Gastrocnemius medialis (tissue), 4 donors: ENCODE measurements at regions of chr7 and their contacts with region 1.

Region 1: DNA sequence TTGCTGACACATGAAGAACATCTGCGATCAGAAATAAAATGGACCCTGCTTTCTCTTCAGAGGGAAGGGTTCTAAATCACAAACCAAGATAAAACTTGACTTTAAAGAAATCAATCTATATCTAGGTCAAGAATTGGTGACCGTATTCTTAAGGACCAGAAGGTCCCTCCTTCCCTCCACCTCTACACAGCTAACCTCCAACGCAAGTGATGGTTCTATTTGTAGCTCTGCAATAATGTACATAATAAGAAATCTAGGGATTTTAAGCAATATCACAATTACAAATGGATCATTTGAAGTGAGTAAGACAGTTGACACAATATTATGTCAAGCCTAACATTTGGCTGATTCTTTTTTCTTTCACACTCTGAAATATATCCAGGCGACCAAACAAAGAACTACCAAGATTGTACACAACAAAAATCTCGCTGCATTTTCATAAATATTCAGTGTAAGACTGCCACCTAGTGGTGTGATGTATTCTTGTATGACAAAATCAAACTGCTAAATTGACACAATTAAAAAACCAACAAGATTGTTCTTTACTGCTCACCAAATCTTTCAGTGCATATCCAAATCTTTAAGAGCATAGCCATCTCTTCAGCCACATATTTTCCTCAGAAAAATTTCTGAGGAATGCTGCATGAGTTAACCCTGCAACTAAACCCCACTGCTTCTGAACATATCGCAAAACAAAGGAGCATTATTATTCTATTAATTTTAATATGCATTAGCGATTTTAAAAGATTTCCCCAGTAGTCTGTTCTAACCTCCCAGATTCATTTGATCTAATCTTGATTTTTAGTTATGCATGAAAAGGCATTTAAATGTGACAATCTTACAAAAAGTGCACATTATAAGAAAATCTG is 44.5 kb downstream of the ICA1 start:
- DNase-seq: no peak
- ATAC-seq: peak; percentile 60 to 63
- H3K4me3 ChIP-seq: no peak overlapping the region
- H3K27ac ChIP-seq: no peak overlapping the region
- H3K4me1 ChIP-seq: peaks cover 0 to 8% of the 10 kb centered on the region in 2 donors
- H3K27me3 ChIP-seq: no peaks in the 10 kb centered on the region
- CTCF ChIP-seq: peak; percentile 65 to 80 (median 72)
- POLR2A ChIP-seq: no peak

Region 2: GRCh38 chr7:7103343-7104313 is 1113.8 kb before region 1 on chr7:
- in situ Hi-C with region 1: no loop called
- intact Hi-C with region 1: loop called (anchors 5 kb)
- DNase-seq: no peak
- ATAC-seq: peak; percentile 74 to 80
- H3K4me3 ChIP-seq: no peak overlapping the region
- H3K27ac ChIP-seq: no peak overlapping the region
- H3K4me1 ChIP-seq: peaks cover 0 to 6% of the 10 kb centered on the region in 2 donors
- H3K27me3 ChIP-seq: no peaks in the 10 kb centered on the region
- CTCF ChIP-seq: peak; percentile 31 to 70 (median 59)
- POLR2A ChIP-seq: no peak

Region 3: DNA sequence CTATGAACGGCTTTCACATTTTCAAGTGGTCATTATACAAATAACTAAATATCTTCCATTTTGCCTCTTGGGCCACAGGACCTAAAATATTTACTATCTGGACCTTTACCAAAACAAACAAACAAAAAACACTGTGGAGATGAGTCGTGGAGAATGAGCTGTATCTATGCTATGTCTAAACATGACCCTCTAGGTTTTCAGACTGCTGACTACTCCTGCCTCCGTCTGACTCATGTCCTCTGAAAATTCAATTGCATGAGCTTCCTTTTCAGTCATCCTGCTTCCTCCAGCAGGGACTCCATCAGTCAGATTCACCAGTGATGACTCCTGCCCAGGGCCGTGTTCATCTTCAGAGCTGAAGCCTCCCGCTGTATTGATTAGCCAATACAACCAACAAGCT is 778.6 kb before region 1 on chr7:
- in situ Hi-C with region 1: loop called in 2 of 4 experiments (anchors 25 kb)
- intact Hi-C with region 1: no loop called
- DNase-seq: no peak
- ATAC-seq: no peak
- H3K4me3 ChIP-seq: no peak overlapping the region
- H3K27ac ChIP-seq: no peak overlapping the region
- H3K4me1 ChIP-seq: no peaks in the 10 kb centered on the region
- H3K27me3 ChIP-seq: no peaks in the 10 kb centered on the region
- CTCF ChIP-seq: no peak
- POLR2A ChIP-seq: no peak

Region 4: GRCh38 chr7:7653593-7654187 is 563.7 kb before region 1 on chr7:
- in situ Hi-C with region 1: loop called in 1 of 4 experiments (anchors 25 kb)
- intact Hi-C with region 1: no loop called
- DNase-seq: no peak
- ATAC-seq: no peak
- H3K4me3 ChIP-seq: no peak overlapping the region
- H3K27ac ChIP-seq: no peak overlapping the region
- H3K4me1 ChIP-seq: peaks cover 7 to 15% of the 10 kb centered on the region in 2 donors
- H3K27me3 ChIP-seq: no peaks in the 10 kb centered on the region
- CTCF ChIP-seq: peak in 2 of 5 experiments; percentile 16 to 28
- POLR2A ChIP-seq: no peak

Region 5: DNA sequence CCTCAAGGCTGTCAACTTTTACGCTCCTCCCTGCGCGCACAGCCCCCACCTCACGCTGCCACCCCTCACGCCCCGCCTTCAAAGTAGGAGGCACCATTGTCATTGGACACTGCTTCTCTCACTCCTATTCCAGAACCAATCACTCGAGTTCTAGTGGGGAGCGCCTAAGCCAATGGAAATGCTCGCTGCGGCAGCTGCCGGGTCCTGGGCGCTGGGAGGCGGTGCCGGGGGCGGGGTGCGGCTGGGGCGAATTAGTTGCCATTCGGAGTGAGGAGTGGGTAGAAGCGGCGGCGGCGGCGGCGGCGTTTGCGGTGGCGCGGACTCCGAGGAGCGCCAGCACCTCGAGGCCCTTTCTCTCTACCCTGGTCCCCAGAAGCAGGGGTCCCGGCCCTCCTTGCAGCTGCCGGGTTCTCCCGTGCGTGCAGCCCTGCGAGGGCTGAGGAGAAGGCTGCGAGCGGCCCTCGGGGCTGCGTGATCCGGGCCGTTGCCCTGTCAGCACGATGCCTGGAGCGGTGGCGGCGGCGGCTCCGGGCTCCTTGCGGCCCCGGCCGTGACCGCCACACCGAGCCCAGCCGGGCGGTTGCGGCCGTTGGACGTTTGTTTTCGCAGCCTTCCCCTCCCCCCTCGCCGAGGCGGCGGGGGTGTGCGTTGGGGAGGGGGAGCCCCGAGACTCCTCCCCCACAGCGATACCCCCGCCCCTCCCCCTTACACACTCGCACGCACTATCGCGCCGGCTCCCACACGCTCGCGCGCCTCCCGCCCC is 248.7 kb before region 1 on chr7 and contains the start of gene GLCCI1:
- in situ Hi-C with region 1: no loop called
- intact Hi-C with region 1: loop called (anchors 5 kb)
- DNase-seq: peak; percentile 97
- ATAC-seq: peak; percentile 96 to 97
- H3K4me3 ChIP-seq: peak within 1 kb of the TSS; percentile 83 to 93 (median 86)
- H3K27ac ChIP-seq: peak within 1 kb of the TSS; percentile 91 to 98 (median 93)
- H3K4me1 ChIP-seq: peaks cover 13 to 22% of the 10 kb centered on the region in 2 donors
- H3K27me3 ChIP-seq: no peaks in the 10 kb centered on the region
- CTCF ChIP-seq: no peak
- POLR2A ChIP-seq: peak; percentile 79 to 95
- total RNA-seq, gene GLCCI1: 1.2 to 6.1 (median 2.6) TPM

Region 6: DNA sequence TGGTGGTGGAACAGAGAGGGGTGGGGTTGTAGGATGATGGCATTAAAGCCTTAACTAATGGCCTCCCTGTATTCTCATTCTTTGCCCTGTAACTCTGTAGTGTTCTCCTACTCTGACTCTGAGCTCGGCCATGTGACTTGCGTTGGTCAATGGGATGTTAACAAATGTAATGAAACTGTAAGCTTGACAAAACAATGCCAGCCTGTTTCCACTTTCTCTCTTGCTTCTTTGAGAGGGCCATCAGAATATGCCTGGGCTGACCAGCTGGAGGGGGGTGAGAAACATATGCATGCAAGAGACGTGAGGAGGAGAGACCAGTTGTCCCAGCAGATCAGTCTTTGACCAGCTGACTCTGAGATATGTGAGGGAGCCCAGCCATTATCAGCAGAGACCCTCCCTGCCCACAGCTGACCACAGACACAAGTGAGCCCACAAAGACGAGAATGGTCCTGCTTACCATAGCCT is 56.0 kb before region 1 on chr7:
- in situ Hi-C with region 1: no loop called
- intact Hi-C with region 1: no loop called
- DNase-seq: no peak
- ATAC-seq: no peak
- H3K4me3 ChIP-seq: no peak overlapping the region
- H3K27ac ChIP-seq: no peak overlapping the region
- H3K4me1 ChIP-seq: no peaks in the 10 kb centered on the region
- H3K27me3 ChIP-seq: no peaks in the 10 kb centered on the region
- CTCF ChIP-seq: no peak
- POLR2A ChIP-seq: no peak

Region 7: DNA sequence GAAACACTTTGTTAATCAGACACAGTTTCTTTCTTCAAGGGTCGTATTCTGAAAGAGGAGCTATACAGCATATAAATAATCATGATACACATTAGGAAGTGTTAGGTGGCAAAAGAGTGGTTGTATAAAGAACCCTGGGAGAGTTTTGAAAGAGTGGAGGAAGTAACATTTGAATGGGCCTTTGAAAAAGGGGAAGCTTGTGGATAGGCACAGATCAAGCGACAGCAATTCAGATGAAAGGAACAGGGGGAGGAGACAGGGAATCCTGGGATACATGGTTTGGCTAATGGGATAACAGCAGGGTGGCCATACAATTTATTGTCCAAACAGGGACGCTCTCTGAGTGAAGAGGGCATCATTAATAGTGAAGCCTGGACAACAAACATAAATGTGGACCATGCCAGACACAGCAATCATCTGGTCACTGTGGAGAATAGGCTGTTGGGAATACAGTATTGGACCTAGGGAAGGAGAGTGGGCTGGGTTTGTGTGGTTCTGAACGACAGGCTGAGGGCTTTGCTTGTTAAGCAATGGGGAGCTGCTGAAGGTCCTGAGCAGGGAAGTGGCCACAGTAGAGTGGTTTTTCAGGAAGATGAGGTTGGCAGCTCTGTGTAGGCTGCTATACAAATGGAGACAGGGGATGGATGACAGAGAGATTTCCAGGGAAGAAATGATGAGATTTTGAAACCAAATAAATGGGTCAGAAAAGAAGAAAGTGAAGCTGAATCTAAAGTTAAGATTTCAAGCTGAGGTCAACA is 31.3 kb before region 1 on chr7:
- in situ Hi-C with region 1: no loop called
- intact Hi-C with region 1: no loop called
- DNase-seq: no peak
- ATAC-seq: no peak
- H3K4me3 ChIP-seq: no peak overlapping the region
- H3K27ac ChIP-seq: no peak overlapping the region
- H3K4me1 ChIP-seq: peaks cover 0 to 7% of the 10 kb centered on the region in 2 donors
- H3K27me3 ChIP-seq: no peaks in the 10 kb centered on the region
- CTCF ChIP-seq: no peak
- POLR2A ChIP-seq: no peak

Region 8: DNA sequence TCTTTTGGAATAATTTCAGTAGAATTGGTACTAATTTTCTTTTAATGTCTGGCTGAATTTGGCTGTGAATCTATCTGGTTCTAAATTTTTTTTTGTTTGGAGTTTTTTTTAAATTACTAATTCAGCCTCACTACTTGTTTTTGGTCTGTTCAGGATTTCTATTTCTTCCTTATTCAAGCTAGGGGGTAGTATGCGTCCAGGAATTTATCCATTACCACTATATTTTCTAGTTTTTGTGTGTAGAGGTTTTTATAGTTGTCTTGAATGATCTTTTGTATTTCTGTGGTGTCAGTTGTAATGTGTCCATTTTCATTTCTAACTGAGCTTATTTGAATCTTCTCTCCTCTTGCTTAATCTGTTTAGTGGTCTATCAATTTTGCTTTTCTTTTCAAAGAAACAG is 93.4 kb after region 1 on chr7:
- in situ Hi-C with region 1: no loop called
- intact Hi-C with region 1: no loop called
- DNase-seq: no peak
- ATAC-seq: no peak
- H3K4me3 ChIP-seq: no peak overlapping the region
- H3K27ac ChIP-seq: no peak overlapping the region
- H3K4me1 ChIP-seq: no peaks in the 10 kb centered on the region
- H3K27me3 ChIP-seq: peaks cover 0 to 4% (median 0%) of the 10 kb centered on the region in 3 donors
- CTCF ChIP-seq: no peak
- POLR2A ChIP-seq: no peak

Region 9: GRCh38 chr7:9280088-9280487 is 1062.7 kb after region 1 on chr7:
- in situ Hi-C with region 1: no loop called
- intact Hi-C with region 1: no loop called
- DNase-seq: no peak
- ATAC-seq: no peak
- H3K4me3 ChIP-seq: no peak overlapping the region
- H3K27ac ChIP-seq: no peak overlapping the region
- H3K4me1 ChIP-seq: no peaks in the 10 kb centered on the region
- H3K27me3 ChIP-seq: no peaks in the 10 kb centered on the region
- CTCF ChIP-seq: no peak
- POLR2A ChIP-seq: no peak